CD4-positive, alpha-beta memory T cell (primary cell): ENCODE measurements at regions of chr14 and their contacts with region 1.

Region 1: GRCh38 chr14:67487937-67488893 is at the start of gene TMEM229B:
- DNase-seq: peak; percentile 74 to 84 (median 81)
- H3K4me3 ChIP-seq: peak within 1 kb of the TSS; percentile 74 to 93
- H3K4me3 Mint-ChIP-seq: peak within 1 kb of the TSS; percentile 91 to 100 (median 96)
- H3K27ac ChIP-seq: peak within 1 kb of the TSS; percentile 93
- H3K27ac Mint-ChIP-seq: peak within 1 kb of the TSS; percentile 95 to 100 (median 99)
- H3K4me1 ChIP-seq: peaks cover 52% of the 10 kb centered on the region
- H3K4me1 Mint-ChIP-seq: peaks cover 39 to 72% (median 57%) of the 10 kb centered on the region in 4 donors
- H3K27me3 ChIP-seq: no peaks in the 10 kb centered on the region
- H3K27me3 Mint-ChIP-seq: no peaks in the 10 kb centered on the region
- total RNA-seq, gene TMEM229B: 34.9 to 35.8 TPM

Region 2: GRCh38 chr14:67514650-67515385 is 26.6 kb after region 1 on chr14:
- CTCF ChIA-PET with region 1: interaction called, 7 read pairs
- POLR2A ChIA-PET with region 1: interaction called, 51 read pairs
- intact Hi-C with region 1: loop called (anchors 1 kb)
- DNase-seq: peak; percentile 46 to 59 (median 55)
- H3K4me3 ChIP-seq: peak overlapping the region; percentile 53 to 56
- H3K4me3 Mint-ChIP-seq: peak overlapping the region; percentile 90 to 97 (median 94)
- H3K27ac ChIP-seq: peak overlapping the region; percentile 68
- H3K27ac Mint-ChIP-seq: peak overlapping the region; percentile 88 to 96 (median 92)
- H3K4me1 ChIP-seq: peaks cover 25% of the 10 kb centered on the region
- H3K4me1 Mint-ChIP-seq: peaks cover 13 to 36% (median 23%) of the 10 kb centered on the region in 4 donors
- H3K27me3 ChIP-seq: no peaks in the 10 kb centered on the region
- H3K27me3 Mint-ChIP-seq: no peaks in the 10 kb centered on the region

Region 3: DNA sequence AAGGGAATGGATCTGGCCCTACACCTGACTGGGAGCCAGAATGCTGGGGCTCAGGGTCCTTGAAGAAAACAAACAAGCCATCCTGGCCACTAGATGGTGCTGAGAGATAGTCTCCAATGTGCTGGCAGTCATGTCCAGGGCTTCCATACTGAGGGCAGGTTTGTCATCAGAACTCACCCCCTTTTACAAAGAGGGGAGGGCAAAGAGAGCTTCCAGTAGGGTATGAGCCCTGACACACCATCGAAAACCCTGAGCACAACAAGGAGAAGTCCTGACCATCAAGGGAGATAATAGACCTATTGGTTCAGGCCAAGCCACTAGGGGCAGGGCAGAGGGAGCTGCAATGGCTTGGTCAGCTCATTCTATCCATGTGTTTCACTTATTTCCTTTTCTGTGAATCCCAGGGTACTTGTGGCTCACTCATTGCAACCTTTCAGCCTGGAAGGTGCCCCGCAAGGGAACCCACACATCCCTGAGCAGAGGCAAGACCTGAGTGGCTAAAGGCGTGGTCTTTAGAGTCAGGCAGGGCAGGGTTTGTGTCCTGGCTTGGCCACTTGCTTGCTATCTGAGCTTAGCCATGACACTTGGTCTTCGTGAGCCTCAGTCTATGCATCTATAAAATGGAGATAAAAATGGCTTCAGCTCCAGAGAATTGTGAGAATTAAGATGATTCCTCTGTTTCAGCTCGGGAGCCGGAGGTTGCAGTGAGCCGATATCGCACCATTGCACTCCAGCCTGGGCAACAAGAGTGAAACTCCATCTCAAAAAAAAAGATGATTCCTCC is 38.7 kb after region 1 on chr14:
- CTCF ChIA-PET with region 1: interaction called, 21 read pairs
- POLR2A ChIA-PET with region 1: no interaction called
- intact Hi-C with region 1: loop called (anchors 5 kb)
- DNase-seq: peak; percentile 30 to 47 (median 31)
- H3K4me3 ChIP-seq: no peak overlapping the region
- H3K4me3 Mint-ChIP-seq: no peak overlapping the region
- H3K27ac ChIP-seq: no peak overlapping the region
- H3K27ac Mint-ChIP-seq: no peak overlapping the region
- H3K4me1 ChIP-seq: no peaks in the 10 kb centered on the region
- H3K4me1 Mint-ChIP-seq: peaks cover 2 to 9% (median 5%) of the 10 kb centered on the region in 4 donors
- H3K27me3 ChIP-seq: peaks cover 15% of the 10 kb centered on the region
- H3K27me3 Mint-ChIP-seq: peaks cover 13 to 44% of the 10 kb centered on the region in 2 donors

Region 4: DNA sequence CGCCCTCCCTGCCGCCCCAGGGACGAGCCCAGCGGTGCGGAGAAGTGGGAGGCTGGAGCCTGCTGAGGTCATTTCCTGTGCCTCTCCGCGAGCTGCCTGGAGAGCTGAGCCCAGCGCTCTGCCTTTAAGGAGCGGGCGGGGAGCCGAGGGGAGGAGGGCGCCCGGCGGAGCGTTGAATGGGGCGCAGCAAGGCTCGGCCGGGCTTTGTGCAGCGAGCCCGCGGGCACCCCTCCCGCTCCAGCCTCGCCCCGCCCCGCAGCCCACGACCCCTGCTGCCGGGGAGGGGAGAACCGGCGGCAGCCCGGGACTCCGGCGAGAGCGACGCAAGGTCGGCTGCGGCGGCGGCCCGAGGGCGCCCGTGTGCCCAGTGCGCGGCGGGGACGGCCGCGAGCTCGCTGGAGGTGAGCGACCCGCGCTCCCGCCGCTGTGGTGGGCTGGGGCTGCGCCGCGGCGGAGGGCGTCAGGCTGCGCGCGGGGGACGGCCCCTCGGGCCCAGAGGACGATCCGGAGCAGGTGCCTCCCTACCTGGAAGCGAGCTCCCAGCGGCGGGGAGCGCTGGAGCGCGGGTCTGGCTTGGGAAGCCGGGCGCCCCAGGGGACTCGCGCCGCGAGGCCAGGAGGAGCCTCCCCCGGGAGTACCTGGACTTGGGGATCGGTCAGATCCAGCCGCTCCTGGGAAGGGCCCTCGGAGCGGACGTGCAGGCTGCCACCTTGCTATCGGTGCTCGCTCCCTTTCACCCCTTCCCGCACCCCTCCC is 45.0 kb after region 1 on chr14 and contains the start of gene PLEKHH1:
- CTCF ChIA-PET with region 1: interaction called, 4 read pairs
- POLR2A ChIA-PET with region 1: no interaction called
- intact Hi-C with region 1: loop called (anchors 5 kb)
- DNase-seq: peak; percentile 21 to 45 (median 24)
- H3K4me3 ChIP-seq: peak within 1 kb of the TSS in 1 of 2 donors; percentile 34
- H3K4me3 Mint-ChIP-seq: peak within 1 kb of the TSS; percentile 59 to 82 (median 74)
- H3K27ac ChIP-seq: no peak within 1 kb of the TSS
- H3K27ac Mint-ChIP-seq: peak within 1 kb of the TSS in 2 of 7 donors; percentile 47 to 64
- H3K4me1 ChIP-seq: peaks cover 10% of the 10 kb centered on the region
- H3K4me1 Mint-ChIP-seq: peaks cover 1 to 6% (median 4%) of the 10 kb centered on the region in 4 donors
- H3K27me3 ChIP-seq: peaks cover 11% of the 10 kb centered on the region
- H3K27me3 Mint-ChIP-seq: peaks cover 14 to 39% of the 10 kb centered on the region in 2 donors
- total RNA-seq, gene PLEKHH1: 0.22 to 0.41 TPM

Region 5: GRCh38 chr14:67883717-67884116 is 395.5 kb after region 1 on chr14:
- CTCF ChIA-PET with region 1: no interaction called
- POLR2A ChIA-PET with region 1: no interaction called
- intact Hi-C with region 1: no loop called
- DNase-seq: peak in 3 of 5 donors; percentile 6 to 11 (median 6)
- H3K4me3 ChIP-seq: no peak overlapping the region
- H3K4me3 Mint-ChIP-seq: no peak overlapping the region
- H3K27ac ChIP-seq: no peak overlapping the region
- H3K27ac Mint-ChIP-seq: no peak overlapping the region
- H3K4me1 ChIP-seq: no peaks in the 10 kb centered on the region
- H3K4me1 Mint-ChIP-seq: peaks cover 0 to 13% (median 10%) of the 10 kb centered on the region in 4 donors
- H3K27me3 ChIP-seq: no peaks in the 10 kb centered on the region
- H3K27me3 Mint-ChIP-seq: no peaks in the 10 kb centered on the region